ENCODE measurements at regions of chr14 and their contacts with region 1.

Region 1: DNA sequence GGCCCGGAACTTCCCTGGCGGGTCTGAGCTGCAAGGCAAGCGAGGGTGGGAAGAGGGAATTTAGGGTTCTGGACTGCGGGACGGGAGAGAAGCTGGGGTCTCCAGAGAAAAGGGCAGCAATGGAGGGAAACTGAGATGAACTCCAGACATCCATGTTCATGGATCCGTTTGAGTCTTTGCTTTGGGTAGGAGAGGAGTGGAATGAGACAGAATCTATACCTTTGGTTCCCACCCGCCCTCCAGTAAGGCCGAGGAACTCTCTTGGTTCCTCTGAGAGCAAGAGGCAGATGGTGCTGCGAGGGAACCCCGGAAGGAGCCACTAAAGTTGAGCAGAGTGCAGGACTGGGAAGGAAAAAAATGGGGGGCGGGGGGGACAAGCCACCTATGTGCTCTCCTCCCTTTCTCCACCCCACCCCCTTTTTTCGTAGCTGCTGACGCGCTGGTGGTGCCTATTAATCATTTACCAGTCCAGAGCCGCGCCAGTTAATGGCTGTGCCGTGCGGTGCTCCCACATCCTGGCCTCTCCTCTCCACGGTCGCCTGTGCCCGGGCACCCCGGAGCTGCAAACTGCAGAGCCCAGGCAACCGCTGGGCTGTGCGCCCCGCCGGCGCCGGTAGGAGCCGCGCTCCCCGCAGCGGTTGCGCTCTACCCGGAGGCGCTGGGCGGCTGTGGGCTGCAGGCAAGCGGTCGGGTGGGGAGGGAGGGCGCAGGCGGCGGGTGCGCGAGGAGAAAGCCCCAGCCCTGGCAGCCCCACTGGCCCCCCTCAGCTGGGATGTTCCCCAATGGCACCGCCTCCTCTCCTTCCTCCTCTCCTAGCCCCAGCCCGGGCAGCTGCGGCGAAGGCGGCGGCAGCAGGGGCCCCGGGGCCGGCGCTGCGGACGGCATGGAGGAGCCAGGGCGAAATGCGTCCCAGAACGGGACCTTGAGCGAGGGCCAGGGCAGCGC is 1.2 kb downstream of the SSTR1 start:
- DNase-seq: peak; percentile 48 to 63
- ATAC-seq: peak; percentile 71
- H3K4me3 ChIP-seq: peak overlapping the region; percentile 2 to 57
- H3K27ac ChIP-seq: no peak overlapping the region
- H3K4me1 ChIP-seq: no peaks in the 10 kb centered on the region
- H3K27me3 ChIP-seq: no peaks in the 10 kb centered on the region

Region 2: DNA sequence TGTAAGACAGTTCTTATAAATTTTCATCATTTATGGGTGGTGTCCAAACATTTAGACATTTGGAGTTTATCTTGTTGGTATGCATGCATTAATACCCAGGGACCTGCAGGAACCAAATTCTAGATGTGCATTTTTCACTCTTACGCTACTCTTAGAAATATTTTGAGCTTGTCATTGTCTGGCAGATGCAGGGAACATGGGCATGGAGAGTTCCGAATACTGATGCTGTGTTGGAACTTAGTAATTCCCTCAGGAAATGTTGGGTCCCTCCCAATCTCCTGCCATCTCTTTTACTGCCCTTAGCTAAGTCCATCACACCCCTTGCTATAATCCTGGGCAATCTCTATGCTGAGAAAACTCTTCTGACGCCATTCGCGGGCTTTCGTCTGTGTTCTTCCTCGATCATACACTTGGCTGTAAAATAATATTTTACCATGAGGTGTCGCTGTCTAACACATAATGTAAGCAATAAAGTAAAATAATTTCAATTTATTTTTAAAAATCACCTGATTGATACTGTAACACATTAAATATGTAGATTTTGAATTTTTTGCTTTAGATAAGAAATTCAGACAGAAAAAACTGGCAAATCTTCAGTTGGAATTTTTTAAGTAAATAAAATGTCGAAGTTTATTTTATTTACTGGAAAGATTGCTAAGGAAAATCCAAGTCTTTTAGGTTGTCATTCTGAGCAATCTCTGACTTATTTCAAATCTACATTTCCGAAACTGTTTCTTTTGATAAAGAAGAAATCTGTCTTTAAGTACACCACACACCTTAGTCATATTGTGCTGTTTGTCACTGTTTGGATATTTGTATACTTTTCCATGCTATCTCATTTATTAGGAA is 305.3 kb before region 1 on chr14:
- intact Hi-C with region 1: loop called in 1 of 2 experiments (anchors 10 kb)
- DNase-seq: no peak
- ATAC-seq: no peak
- H3K4me3 ChIP-seq: no peak overlapping the region
- H3K27ac ChIP-seq: no peak overlapping the region
- H3K4me1 ChIP-seq: no peaks in the 10 kb centered on the region
- H3K27me3 ChIP-seq: no peaks in the 10 kb centered on the region

Region 3: GRCh38 chr14:37985826-37986470 is 222.9 kb before region 1 on chr14:
- intact Hi-C with region 1: loop called in 1 of 2 experiments (anchors 5 kb)
- DNase-seq: no peak
- ATAC-seq: no peak
- H3K4me3 ChIP-seq: no peak overlapping the region
- H3K27ac ChIP-seq: no peak overlapping the region
- H3K4me1 ChIP-seq: no peaks in the 10 kb centered on the region
- H3K27me3 ChIP-seq: no peaks in the 10 kb centered on the region